ENCODE measurements at regions of chr19 and their contacts with region 1.

Region 1: GRCh38 chr19:47124937-47125668 is 5.5 kb upstream of the SAE1 start:
- DNase-seq: peak in 7 of 35 experiments; percentile 7 to 82 (median 23)
- ATAC-seq: peak; percentile 50 to 71 (median 63)
- H3K4me3 ChIP-seq: no peak overlapping the region
- H3K4me3 Mint-ChIP-seq: no peak overlapping the region
- H3K27ac ChIP-seq: no peak overlapping the region
- H3K27ac Mint-ChIP-seq: peak overlapping the region in 1 of 2 donors; percentile 29
- H3K4me1 ChIP-seq: peaks cover 0 to 3% of the 10 kb centered on the region in 2 experiments
- H3K4me1 Mint-ChIP-seq: peaks cover under 1 to 8% (median 6%) of the 10 kb centered on the region in 3 donors
- H3K27me3 ChIP-seq: no peaks in the 10 kb centered on the region
- H3K27me3 Mint-ChIP-seq: peaks cover 0 to 2% of the 10 kb centered on the region in 2 donors

Region 2: GRCh38 chr19:46192992-46193650 is 932.0 kb before region 1 on chr19:
- CTCF ChIA-PET with region 1: no interaction called
- POLR2A ChIA-PET with region 1: no interaction called
- DNase-seq: peak in 5 of 35 experiments; percentile 7 to 27 (median 11)
- ATAC-seq: peak in 2 of 4 experiments; percentile 34 to 61
- H3K4me3 ChIP-seq: no peak overlapping the region
- H3K4me3 Mint-ChIP-seq: no peak overlapping the region
- H3K27ac ChIP-seq: no peak overlapping the region
- H3K27ac Mint-ChIP-seq: no peak overlapping the region
- H3K4me1 ChIP-seq: no peaks in the 10 kb centered on the region
- H3K4me1 Mint-ChIP-seq: no peaks in the 10 kb centered on the region
- H3K27me3 ChIP-seq: peaks cover 0 to 76% of the 10 kb centered on the region in 2 experiments
- H3K27me3 Mint-ChIP-seq: peaks cover 48 to 73% of the 10 kb centered on the region in 2 donors

Region 3: DNA sequence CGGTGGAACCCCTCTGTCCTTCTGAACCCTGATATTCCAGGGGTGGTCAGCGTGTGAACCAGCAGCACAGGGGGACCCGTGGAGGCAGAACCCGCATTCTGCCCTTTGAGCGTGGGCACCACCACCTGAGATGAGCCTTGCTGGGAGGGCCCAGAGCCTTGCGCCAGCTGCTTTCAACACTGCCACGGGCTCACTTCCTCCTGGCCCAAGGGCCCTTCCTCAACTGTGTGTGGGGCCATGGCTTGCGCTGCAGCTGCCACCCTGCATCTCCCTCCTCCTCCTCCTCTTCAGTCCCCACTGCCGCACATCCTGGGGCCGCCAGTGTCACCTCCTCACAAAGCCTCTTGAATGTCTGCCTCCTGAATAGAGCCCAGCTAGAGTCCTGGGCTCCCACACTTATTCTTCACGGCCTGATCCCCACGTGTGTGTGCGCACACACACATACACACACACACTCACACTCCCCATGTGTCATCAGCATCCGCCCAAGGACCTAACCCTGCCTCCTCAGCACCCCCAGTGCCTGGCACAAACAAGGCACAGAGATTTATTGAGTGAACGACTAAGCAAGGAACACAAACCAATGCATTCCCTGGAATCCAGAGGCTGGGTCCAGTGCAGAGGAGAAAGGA is 49.8 kb before region 1 on chr19:
- CTCF ChIA-PET with region 1: interaction called, 8 to 16 read pairs
- POLR2A ChIA-PET with region 1: interaction called in 1 of 2 experiments, 6 read pairs
- DNase-seq: peak in 1 of 35 experiments; percentile 18
- ATAC-seq: no peak
- H3K4me3 ChIP-seq: no peak overlapping the region
- H3K4me3 Mint-ChIP-seq: no peak overlapping the region
- H3K27ac ChIP-seq: no peak overlapping the region
- H3K27ac Mint-ChIP-seq: peak overlapping the region; percentile 33 to 69
- H3K4me1 ChIP-seq: peaks cover 0 to 8% of the 10 kb centered on the region in 2 experiments
- H3K4me1 Mint-ChIP-seq: peaks cover 4 to 11% (median 8%) of the 10 kb centered on the region in 3 donors
- H3K27me3 ChIP-seq: no peaks in the 10 kb centered on the region
- H3K27me3 Mint-ChIP-seq: no peaks in the 10 kb centered on the region

Region 4: DNA sequence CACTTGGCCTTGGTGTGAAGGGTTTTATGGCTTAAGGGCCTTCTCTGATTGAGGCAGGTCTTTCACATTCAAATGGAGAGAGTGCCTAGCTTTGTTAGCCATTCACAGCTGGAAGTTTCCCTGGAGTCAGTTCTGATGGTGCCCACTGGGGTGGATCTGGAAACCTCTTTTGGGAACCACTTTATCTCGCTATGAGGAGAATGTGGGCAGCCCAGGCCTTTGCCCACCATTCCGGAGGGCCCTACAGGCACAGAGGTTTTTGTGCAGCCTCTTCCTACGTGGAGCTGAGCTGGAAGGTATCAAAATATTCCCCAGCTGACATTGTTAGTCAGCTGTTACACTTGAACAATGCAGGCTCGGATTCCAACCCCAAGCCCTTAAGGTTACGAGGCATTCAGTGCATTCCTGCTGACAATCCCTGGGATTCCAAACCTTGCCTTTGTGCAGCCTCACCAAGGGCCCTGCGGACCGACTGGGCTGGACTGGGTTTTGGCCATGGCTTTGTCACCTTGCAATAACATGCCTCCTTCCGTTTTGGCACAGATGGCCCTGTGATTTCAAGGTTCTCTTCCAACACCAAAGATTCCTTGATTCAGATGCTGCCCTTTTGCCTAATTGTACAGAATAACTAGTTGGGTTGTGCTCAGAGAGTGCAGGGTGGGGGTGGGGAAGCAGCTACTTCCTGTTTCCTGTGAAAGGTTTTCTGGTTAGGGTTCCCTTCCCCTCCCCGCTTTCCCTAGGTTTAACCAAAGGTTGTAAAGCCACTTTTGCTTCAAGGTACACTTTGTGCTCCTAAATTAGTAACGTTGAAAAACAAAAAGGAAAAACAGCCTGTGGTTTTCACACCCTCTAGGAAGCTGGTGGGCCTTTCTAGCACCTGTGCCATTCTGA is 32.6 kb after region 1 on chr19:
- CTCF ChIA-PET with region 1: no interaction called
- POLR2A ChIA-PET with region 1: no interaction called
- DNase-seq: peak in 33 of 35 experiments; percentile 9 to 72 (median 39)
- ATAC-seq: peak; percentile 32 to 50 (median 38)
- H3K4me3 ChIP-seq: peak overlapping the region; percentile 6 to 29
- H3K4me3 Mint-ChIP-seq: peak overlapping the region; percentile 29 to 80 (median 61)
- H3K27ac ChIP-seq: peak overlapping the region; percentile 68
- H3K27ac Mint-ChIP-seq: peak overlapping the region; percentile 92 to 94
- H3K4me1 ChIP-seq: peaks cover 59 to 76% of the 10 kb centered on the region in 2 experiments
- H3K4me1 Mint-ChIP-seq: peaks cover 66 to 74% (median 68%) of the 10 kb centered on the region in 3 donors
- H3K27me3 ChIP-seq: no peaks in the 10 kb centered on the region
- H3K27me3 Mint-ChIP-seq: no peaks in the 10 kb centered on the region

Measured in T-cell (primary cell).